Spleen (tissue), 13 donors: ENCODE measurements at regions of chr16 and their contacts with region 1.

Region 1: DNA sequence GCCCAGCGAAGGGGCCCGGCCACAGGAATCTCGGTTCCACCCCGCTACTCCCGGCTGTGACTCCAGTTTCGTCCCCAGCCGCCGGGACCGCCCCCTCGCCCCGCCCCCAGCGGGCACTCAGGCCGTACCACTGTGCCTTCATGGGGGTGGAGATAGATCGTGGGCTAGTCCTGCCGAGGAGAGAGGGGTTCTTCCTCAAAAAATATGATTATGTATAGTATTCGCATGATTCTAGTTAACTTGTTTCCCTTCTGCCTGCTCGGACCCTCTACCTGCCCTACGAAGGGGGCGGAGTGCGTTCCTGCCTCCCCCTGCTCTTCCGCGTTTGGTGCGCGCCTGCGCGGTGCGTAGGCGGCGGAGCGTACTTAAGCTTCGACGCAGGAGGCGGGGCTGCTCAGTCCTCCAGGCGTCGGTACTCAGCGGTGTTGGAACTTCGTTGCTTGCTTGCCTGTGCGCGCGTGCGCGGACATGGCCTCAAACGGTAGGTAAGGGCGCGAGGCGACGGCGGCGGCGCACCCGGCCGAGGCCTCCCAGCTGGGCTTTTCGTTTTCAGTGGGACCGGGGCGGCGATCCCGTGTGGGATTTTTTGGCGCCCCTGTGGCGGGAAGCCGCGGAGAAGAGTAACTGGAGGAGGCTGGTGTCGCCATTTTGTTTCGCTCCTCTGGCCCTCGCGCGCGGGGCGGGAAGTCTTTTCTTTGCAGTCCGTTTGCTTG is at the start of gene FUS:
- DNase-seq: peak; percentile 98
- H3K4me3 ChIP-seq: peak within 1 kb of the TSS; percentile 73 to 98 (median 93)
- H3K27ac ChIP-seq: peak within 1 kb of the TSS; percentile 93 to 99 (median 96)
- H3K4me1 ChIP-seq: peaks cover 45 to 76% (median 63%) of the 10 kb centered on the region in 6 donors
- H3K27me3 ChIP-seq: no peaks in the 10 kb centered on the region
- CTCF ChIP-seq: no peak
- POLR2A ChIP-seq: peak; percentile 98 to 99 (median 99)
- total RNA-seq, gene FUS: 119 to 474 (median 284) TPM

Region 2: DNA sequence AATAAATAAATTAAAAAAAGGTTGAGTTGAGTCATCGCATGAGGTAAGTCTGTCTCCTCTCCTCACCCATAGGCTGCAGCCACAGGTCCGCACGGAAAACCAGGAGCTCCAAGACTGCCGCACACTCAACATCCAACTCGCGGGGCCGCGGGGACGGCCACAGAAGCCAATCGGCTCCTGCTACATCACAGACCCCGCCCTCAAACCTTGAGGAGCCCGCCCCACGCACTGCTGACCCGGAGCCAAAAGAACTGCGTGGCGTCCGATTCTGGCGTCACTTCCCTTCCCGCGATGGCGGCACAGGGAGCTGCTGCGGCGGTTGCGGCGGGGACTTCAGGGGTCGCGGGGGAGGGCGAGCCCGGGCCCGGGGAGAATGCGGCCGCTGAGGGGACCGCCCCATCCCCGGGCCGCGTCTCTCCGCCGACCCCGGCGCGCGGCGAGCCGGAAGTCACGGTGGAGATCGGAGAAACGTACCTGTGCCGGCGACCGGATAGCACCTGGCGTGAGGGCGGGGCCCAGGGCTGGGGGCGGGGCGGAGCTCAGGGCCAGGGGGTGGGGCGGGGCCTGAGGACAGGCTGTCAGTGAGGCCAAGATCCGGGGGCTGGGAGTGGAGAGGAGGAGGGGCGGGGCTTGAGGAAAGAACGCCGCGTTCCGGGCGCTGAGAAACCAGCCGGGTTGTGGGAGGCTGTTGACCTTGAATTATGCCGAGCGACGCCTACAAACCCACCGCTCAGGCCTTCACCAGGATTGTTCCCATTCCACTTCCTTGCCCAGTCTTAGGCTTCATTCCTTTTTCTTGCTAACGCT is 62.3 kb before region 1 on chr16 and contains the start of gene KAT8:
- intact Hi-C with region 1: loop called (anchors 2 kb)
- DNase-seq: peak; percentile 99
- H3K4me3 ChIP-seq: peak within 1 kb of the TSS; percentile 57 to 80 (median 69)
- H3K27ac ChIP-seq: peak within 1 kb of the TSS; percentile 94 to 99 (median 98)
- H3K4me1 ChIP-seq: peaks cover 15 to 73% (median 39%) of the 10 kb centered on the region in 6 donors
- H3K27me3 ChIP-seq: no peaks in the 10 kb centered on the region
- CTCF ChIP-seq: peak in 1 of 11 experiments; percentile 8
- POLR2A ChIP-seq: peak; percentile 35 to 78 (median 76)
- total RNA-seq, gene KAT8: 63.2 to 94.8 (median 85.2) TPM

Region 3: GRCh38 chr16:31142109-31143010 is 37.5 kb before region 1 on chr16:
- intact Hi-C with region 1: loop called (anchors 2 kb)
- DNase-seq: peak; percentile 100
- H3K4me3 ChIP-seq: peak overlapping the region; percentile 30 to 81 (median 46)
- H3K27ac ChIP-seq: peak overlapping the region; percentile 70 to 95 (median 87)
- H3K4me1 ChIP-seq: peaks cover 7 to 47% (median 26%) of the 10 kb centered on the region in 6 donors
- H3K27me3 ChIP-seq: peaks cover 0 to under 1% (median 0%) of the 10 kb centered on the region in 7 donors
- CTCF ChIP-seq: peak; percentile 98 to 100 (median 99)
- POLR2A ChIP-seq: no peak